Heart left ventricle (tissue), 16 donors: ENCODE measurements at regions of chr9 and their contacts with region 1.

Region 1: DNA sequence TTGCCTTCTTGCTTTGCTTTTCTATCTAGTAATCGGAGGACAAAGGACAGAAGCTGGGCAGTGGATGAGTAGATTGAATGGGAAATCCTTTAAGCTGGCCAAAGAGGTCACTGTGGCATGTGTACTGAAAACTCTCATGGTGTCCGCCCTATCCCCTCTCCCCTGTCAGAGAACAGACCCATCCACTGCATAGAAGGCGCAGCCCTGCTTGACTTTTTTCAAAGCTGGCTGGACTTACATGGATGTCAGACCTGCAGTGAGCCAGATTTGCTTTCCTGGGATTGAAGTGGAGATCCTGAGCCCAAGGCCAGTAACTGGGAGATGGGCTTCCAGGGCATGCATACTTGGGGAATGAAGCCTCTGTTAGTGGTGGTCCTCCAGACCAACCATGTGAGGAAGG is 329.5 kb downstream of the TRPM3 start:
- DNase-seq: no peak
- ATAC-seq: no peak
- H3K4me3 ChIP-seq: no peak overlapping the region
- H3K27ac ChIP-seq: no peak overlapping the region
- H3K4me1 ChIP-seq: no peaks in the 10 kb centered on the region
- H3K27me3 ChIP-seq: no peaks in the 10 kb centered on the region
- CTCF ChIP-seq: no peak
- POLR2A ChIP-seq: no peak

Region 2: DNA sequence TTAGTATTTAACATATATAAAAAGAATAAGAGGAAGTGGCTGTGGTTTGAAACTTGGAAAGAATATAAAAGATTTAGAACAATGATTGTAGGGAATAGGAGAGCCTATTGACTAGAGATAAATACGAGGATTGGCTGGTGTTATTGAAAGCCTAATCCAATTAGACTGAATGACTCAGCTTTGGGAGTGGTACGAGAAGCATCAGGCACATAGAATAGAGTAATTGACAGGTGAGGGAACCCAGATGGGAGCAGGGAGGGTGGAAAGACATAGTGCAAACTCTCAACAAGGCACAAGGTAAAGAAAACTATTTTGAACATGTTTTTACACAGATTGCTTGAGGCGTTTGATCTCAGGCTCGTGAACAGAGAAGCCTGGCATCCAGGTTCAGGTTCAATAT is 38.6 kb before region 1 on chr9:
- intact Hi-C with region 1: no loop called
- DNase-seq: no peak
- ATAC-seq: no peak
- H3K4me3 ChIP-seq: no peak overlapping the region
- H3K27ac ChIP-seq: no peak overlapping the region
- H3K4me1 ChIP-seq: no peaks in the 10 kb centered on the region
- H3K27me3 ChIP-seq: no peaks in the 10 kb centered on the region
- CTCF ChIP-seq: no peak
- POLR2A ChIP-seq: no peak

Region 3: DNA sequence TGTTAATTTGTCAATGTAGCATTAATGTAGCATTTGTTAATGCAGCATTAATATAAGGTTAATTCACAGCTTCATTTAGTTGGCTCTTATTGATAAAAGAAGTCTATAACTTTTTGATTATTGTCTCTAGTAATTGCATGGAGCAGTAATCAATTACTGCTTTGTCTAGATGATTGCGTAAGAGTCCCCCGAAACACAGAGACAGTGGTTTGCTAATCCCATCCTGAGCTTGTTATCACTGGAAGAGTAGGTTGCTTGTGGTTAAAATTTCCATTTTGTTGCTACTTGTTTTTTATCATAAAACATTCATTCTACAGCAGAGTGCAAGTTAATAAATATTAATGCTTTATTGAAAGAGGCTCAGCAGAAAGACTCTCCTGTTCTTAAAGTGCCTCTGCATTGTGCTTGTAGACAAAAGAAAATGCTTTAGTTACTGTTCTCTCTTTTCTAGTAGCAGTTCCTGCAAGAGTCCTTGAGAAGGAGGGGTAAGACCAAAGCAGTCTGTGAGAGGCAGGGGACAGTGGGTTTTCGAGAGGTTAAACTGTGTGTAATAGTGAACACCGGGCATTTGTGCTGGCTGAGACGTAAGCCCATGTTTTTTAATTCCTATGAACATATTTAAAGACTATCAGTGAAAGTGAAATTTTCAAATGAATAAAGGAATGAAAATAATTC is 37.8 kb after region 1 on chr9:
- intact Hi-C with region 1: no loop called
- DNase-seq: no peak
- ATAC-seq: no peak
- H3K4me3 ChIP-seq: no peak overlapping the region
- H3K27ac ChIP-seq: no peak overlapping the region
- H3K4me1 ChIP-seq: no peaks in the 10 kb centered on the region
- H3K27me3 ChIP-seq: no peaks in the 10 kb centered on the region
- CTCF ChIP-seq: no peak
- POLR2A ChIP-seq: no peak

Region 4: GRCh38 chr9:70840266-70840665 is 48.3 kb after region 1 on chr9:
- intact Hi-C with region 1: loop called in 1 of 10 experiments (anchors 5 kb)
- DNase-seq: no peak
- ATAC-seq: no peak
- H3K4me3 ChIP-seq: no peak overlapping the region
- H3K27ac ChIP-seq: no peak overlapping the region
- H3K4me1 ChIP-seq: no peaks in the 10 kb centered on the region
- H3K27me3 ChIP-seq: no peaks in the 10 kb centered on the region
- CTCF ChIP-seq: no peak
- POLR2A ChIP-seq: no peak